MCF 10A (cell line): ENCODE measurements at regions of chr5 and their contacts with region 1.

Region 1: DNA sequence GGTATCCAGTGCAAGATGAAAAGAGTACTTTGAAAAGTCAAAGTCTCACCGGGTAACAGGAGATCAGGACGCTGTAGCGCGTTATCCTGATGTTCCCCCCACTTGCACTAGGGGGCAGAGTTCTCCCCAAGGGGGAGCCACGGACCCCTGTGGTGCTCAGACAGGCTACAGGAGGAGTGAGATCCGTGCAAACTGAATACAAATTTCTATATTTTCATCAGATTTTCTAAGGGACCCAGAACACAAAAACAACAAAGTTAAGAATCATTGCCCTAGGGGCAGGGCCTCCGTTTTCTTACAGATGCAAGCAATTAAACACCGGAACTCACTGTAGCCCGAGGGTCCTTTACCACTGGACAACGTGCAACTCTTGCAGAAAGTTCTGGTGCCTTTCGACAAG is 2.0 kb downstream of the MYO10 start:
- DNase-seq: peak; percentile 80
- H3K4me3 Mint-ChIP-seq: peak overlapping the region; percentile 82
- H3K27ac Mint-ChIP-seq: no peak overlapping the region
- H3K4me1 Mint-ChIP-seq: peaks cover 34% of the 10 kb centered on the region
- H3K27me3 Mint-ChIP-seq: peaks cover 15% of the 10 kb centered on the region
- CTCF ChIP-seq: peak; percentile 90

Region 2: DNA sequence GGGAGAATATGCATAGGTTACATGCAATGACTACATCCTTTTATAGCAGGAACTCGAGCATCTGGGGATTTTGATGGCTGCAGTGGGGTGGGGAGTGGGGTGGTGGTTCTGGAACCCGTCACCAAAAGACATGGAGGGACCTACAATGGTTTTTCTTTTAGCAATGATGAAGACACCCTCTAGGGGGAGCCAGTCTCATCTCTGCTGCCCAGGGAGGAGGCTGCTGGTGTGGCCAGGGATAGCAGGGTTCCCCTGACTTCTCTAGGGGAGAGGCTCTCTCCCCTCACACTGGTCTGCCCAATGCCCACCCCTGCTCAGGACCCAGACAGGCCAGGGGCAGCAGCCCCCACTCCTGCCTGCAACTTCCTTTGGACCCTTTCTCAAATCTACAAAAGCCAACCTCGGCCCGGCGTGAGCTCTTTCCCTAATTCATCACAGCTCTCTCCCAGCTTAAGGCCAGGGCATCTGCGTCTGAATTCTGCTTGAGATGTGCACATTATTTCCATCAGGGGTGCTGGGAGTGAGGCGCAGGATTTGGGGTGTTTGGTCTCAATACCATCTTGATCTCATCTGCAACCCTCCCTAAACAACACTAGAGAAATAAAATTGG is 243.8 kb before region 1 on chr5:
- CTCF ChIA-PET with region 1: interaction called, 3 read pairs
- POLR2A ChIA-PET with region 1: no interaction called
- intact Hi-C with region 1: loop called (anchors 1 kb)
- DNase-seq: peak; percentile 59
- H3K4me3 Mint-ChIP-seq: no peak overlapping the region
- H3K27ac Mint-ChIP-seq: no peak overlapping the region
- H3K4me1 Mint-ChIP-seq: no peaks in the 10 kb centered on the region
- H3K27me3 Mint-ChIP-seq: no peaks in the 10 kb centered on the region
- CTCF ChIP-seq: peak; percentile 48

Region 3: GRCh38 chr5:16842896-16843295 is 91.2 kb before region 1 on chr5:
- CTCF ChIA-PET with region 1: interaction called, 4 read pairs
- POLR2A ChIA-PET with region 1: no interaction called
- intact Hi-C with region 1: loop called (anchors 1 kb)
- DNase-seq: no peak
- H3K4me3 Mint-ChIP-seq: no peak overlapping the region
- H3K27ac Mint-ChIP-seq: no peak overlapping the region
- H3K4me1 Mint-ChIP-seq: no peaks in the 10 kb centered on the region
- H3K27me3 Mint-ChIP-seq: no peaks in the 10 kb centered on the region
- CTCF ChIP-seq: no peak

Region 4: GRCh38 chr5:16855485-16855884 is 78.6 kb before region 1 on chr5:
- CTCF ChIA-PET with region 1: interaction called, 4 read pairs
- POLR2A ChIA-PET with region 1: interaction called, 5 read pairs
- intact Hi-C with region 1: loop called (anchors 1 kb)
- DNase-seq: no peak
- H3K4me3 Mint-ChIP-seq: no peak overlapping the region
- H3K27ac Mint-ChIP-seq: no peak overlapping the region
- H3K4me1 Mint-ChIP-seq: peaks cover 10% of the 10 kb centered on the region
- H3K27me3 Mint-ChIP-seq: no peaks in the 10 kb centered on the region
- CTCF ChIP-seq: no peak

Region 5: DNA sequence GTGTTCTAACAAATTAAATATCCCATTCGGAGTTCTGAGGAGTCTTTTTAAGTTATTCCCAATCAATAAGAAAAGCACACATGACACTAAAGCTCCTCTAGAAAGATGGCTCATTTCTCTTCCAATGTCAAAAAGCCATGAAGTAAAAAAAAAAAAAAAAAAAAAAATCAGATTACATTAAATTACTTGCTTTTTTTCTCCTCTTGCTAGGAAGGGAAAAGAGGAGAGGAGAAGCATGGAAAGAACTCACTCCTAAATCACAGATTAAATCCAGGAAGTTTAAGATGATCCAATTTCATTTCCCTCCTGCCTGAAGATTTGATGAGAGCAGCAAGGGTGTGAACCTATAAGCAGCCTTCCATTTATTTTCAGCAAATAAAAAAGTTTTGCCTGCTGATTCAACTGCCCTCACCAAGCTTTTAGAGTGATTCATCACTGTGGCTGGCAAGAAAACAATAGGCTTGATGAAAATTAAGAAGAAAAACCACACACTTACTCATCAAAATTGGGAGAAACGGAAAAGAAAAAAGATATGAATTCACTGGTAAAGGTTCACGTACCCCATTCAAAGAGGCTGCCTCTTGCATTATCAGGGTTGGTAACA is 17.8 kb before region 1 on chr5:
- CTCF ChIA-PET with region 1: interaction called, 46 read pairs
- POLR2A ChIA-PET with region 1: interaction called, 60 read pairs
- intact Hi-C with region 1: no loop called
- DNase-seq: peak; percentile 93
- H3K4me3 Mint-ChIP-seq: peak overlapping the region; percentile 54
- H3K27ac Mint-ChIP-seq: peak overlapping the region; percentile 81
- H3K4me1 Mint-ChIP-seq: peaks cover 43% of the 10 kb centered on the region
- H3K27me3 Mint-ChIP-seq: no peaks in the 10 kb centered on the region
- CTCF ChIP-seq: no peak

Region 6: GRCh38 chr5:17012302-17012701 is 78.2 kb after region 1 on chr5:
- CTCF ChIA-PET with region 1: no interaction called
- POLR2A ChIA-PET with region 1: no interaction called
- intact Hi-C with region 1: loop called (anchors 2 kb)
- DNase-seq: peak; percentile 28
- H3K4me3 Mint-ChIP-seq: no peak overlapping the region
- H3K27ac Mint-ChIP-seq: no peak overlapping the region
- H3K4me1 Mint-ChIP-seq: peaks cover 6% of the 10 kb centered on the region
- H3K27me3 Mint-ChIP-seq: no peaks in the 10 kb centered on the region
- CTCF ChIP-seq: no peak